ENCODE measurements at regions of chr11 and their contacts with region 1.

Region 1: GRCh38 chr11:128879817-128880216 is 11.3 kb upstream of the KCNJ5 start:
- DNase-seq: no peak
- H3K4me3 ChIP-seq: no peak overlapping the region
- H3K27me3 ChIP-seq: peaks cover 12% of the 10 kb centered on the region
- CTCF ChIP-seq: no peak

Region 2: DNA sequence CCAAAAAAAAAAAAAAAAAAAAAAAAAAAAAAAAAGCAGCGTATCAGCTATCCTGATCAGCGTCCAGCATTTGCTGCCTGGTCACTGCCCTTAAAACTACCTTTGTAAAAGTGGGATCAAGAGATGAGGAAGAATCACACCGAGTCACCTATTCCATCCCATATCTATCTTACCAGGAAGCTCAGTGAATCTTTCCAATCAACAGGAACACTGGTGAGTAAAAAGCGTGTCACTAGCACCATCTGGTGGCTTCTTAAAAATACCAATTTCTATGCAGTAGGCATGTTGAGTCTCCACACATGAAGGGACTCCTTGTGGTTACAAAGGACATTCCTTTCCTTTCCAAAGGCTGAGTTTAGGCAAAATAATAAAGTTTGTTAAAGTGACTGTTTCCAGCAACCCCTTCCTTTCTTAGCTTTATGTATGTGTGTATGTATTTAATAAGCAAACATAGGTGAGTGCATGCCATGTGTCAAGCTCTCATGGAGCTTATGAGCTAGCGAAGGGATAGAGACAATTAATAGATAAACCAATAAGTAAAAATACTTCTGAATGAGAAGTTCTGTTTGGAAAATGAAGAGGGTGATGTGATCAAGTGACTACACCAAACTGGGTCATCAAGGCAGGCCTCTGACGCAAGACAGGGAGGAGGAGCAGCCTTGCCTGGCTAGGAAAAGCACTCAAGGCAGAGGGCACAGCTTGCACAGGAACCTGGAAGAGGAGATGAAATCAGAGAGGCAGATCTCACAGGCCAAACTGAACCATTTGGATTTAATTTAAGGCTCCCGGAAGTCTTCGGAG is 76.8 kb after region 1 on chr11:
- CTCF ChIA-PET with region 1: interaction called, 253 read pairs
- POLR2A ChIA-PET with region 1: no interaction called
- DNase-seq: peak; percentile 26
- H3K4me3 ChIP-seq: no peak overlapping the region
- H3K27me3 ChIP-seq: peaks cover 1% of the 10 kb centered on the region
- CTCF ChIP-seq: peak; percentile 65

Region 3: DNA sequence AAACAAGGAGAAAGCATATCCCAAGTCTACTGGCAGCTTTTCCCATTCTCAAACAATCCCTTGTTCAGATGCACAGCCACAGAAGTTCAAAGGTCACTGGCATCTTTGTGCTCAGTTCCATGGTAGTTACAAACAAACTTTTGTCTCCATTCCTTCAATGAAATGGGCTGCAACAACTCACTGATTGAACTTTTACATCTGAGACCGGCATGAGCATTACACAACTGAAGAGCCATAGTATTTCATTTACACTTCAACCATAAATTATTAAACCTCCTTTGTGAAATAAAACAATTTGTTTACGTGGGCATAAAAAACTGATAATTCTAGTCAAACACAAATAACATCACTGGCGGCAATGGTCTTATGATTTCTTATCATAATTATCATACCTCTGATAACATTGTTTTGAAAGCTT is 380.1 kb after region 1 on chr11:
- CTCF ChIA-PET with region 1: no interaction called
- POLR2A ChIA-PET with region 1: no interaction called
- DNase-seq: no peak
- H3K4me3 ChIP-seq: no peak overlapping the region
- H3K27me3 ChIP-seq: no peaks in the 10 kb centered on the region
- CTCF ChIP-seq: no peak

Measured in BJ (cell line).